Activated naive CD4-positive, alpha-beta T cell treated with anti-CD3 and anti-CD28 coated beads for 36 hours (primary cell): ENCODE measurements at regions of chr9 and their contacts with region 1.

Region 1: GRCh38 chr9:77977210-77977611 is 54.4 kb downstream of the GNAQ start:
- DNase-seq: peak; percentile 80
- H3K4me3 Mint-ChIP-seq: peak overlapping the region; percentile 15
- H3K27ac Mint-ChIP-seq: peak overlapping the region; percentile 83
- H3K4me1 Mint-ChIP-seq: peaks cover 55% of the 10 kb centered on the region
- H3K27me3 Mint-ChIP-seq: no peaks in the 10 kb centered on the region

Region 2: DNA sequence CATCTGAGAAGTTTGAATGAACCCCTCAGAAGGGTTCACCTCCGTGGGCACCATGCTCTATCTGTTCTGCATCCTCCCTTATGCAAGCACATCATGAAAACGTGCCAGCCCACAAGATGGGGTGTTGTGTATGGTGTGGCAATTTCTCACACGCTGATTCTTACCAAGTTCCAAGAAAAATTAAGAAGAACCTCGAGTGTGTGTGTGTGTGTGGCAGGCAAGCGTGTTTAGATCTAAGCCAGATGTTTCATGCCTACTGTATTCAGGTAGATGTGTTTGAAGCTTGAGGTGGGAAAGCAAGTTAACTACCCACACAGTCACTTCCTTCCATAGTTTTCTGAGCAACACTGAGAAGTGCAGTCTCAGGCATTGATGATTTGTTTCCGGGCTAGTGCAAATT is 251.4 kb before region 1 on chr9:
- CTCF ChIA-PET with region 1: no interaction called
- intact Hi-C with region 1: loop called (anchors 5 kb)
- DNase-seq: peak; percentile 59
- H3K4me3 Mint-ChIP-seq: no peak overlapping the region
- H3K27ac Mint-ChIP-seq: peak overlapping the region; percentile 57
- H3K4me1 Mint-ChIP-seq: peaks cover 49% of the 10 kb centered on the region
- H3K27me3 Mint-ChIP-seq: no peaks in the 10 kb centered on the region

Region 3: DNA sequence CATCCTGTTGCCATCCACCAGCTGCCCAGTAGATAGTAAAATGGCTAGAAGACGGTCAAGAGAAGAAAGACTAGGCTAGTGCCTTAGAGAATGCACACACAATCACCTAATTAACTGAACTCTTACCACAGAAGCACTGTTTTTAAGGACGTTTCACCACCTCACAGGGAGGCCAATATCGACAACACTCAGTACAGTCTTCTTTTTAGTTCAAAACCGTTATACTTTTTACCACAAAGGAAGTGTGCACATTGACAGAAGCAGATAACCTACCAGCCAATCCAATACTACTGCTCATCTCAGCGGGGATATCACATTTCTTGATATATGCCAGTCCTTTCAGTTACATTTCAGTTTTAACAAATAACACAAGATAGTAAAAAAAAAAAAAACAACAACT is 67.9 kb before region 1 on chr9:
- CTCF ChIA-PET with region 1: no interaction called
- intact Hi-C with region 1: loop called (anchors 1 kb)
- DNase-seq: peak; percentile 35
- H3K4me3 Mint-ChIP-seq: peak overlapping the region; percentile 45
- H3K27ac Mint-ChIP-seq: peak overlapping the region; percentile 80
- H3K4me1 Mint-ChIP-seq: peaks cover 50% of the 10 kb centered on the region
- H3K27me3 Mint-ChIP-seq: no peaks in the 10 kb centered on the region

Region 4: GRCh38 chr9:77997611-77998284 is 20.5 kb after region 1 on chr9:
- CTCF ChIA-PET with region 1: interaction called, 15 read pairs
- intact Hi-C with region 1: loop called (anchors 1 kb)
- DNase-seq: no peak
- H3K4me3 Mint-ChIP-seq: no peak overlapping the region
- H3K27ac Mint-ChIP-seq: no peak overlapping the region
- H3K4me1 Mint-ChIP-seq: peaks cover 44% of the 10 kb centered on the region
- H3K27me3 Mint-ChIP-seq: no peaks in the 10 kb centered on the region

Region 5: GRCh38 chr9:78213712-78214111 is 236.5 kb after region 1 on chr9:
- CTCF ChIA-PET with region 1: interaction called, 4 read pairs
- intact Hi-C with region 1: loop called (anchors 1 kb)
- DNase-seq: no peak
- H3K4me3 Mint-ChIP-seq: no peak overlapping the region
- H3K27ac Mint-ChIP-seq: no peak overlapping the region
- H3K4me1 Mint-ChIP-seq: peaks cover 31% of the 10 kb centered on the region
- H3K27me3 Mint-ChIP-seq: no peaks in the 10 kb centered on the region

Region 6: GRCh38 chr9:78369639-78370219 is 392.5 kb after region 1 on chr9:
- CTCF ChIA-PET with region 1: interaction called, 4 read pairs
- intact Hi-C with region 1: loop called (anchors 2 kb)
- DNase-seq: peak; percentile 68
- H3K4me3 Mint-ChIP-seq: no peak overlapping the region
- H3K27ac Mint-ChIP-seq: no peak overlapping the region
- H3K4me1 Mint-ChIP-seq: no peaks in the 10 kb centered on the region
- H3K27me3 Mint-ChIP-seq: peaks cover 4% of the 10 kb centered on the region